GM12878 (cell line): ENCODE measurements at regions of chr9 and their contacts with region 1.

Region 1: GRCh38 chr9:112793213-112793810 is 42.8 kb downstream of the SNX30 start:
- DNase-seq: peak; percentile 34
- ATAC-seq: peak; percentile 99
- H3K4me3 ChIP-seq: no peak overlapping the region
- H3K27ac ChIP-seq: no peak overlapping the region
- H3K4me1 ChIP-seq: peaks cover 11% of the 10 kb centered on the region
- H3K27me3 ChIP-seq: peaks cover 0 to 1% of the 10 kb centered on the region in 2 experiments; a peak in 1 of 4 replicates
- CTCF ChIP-seq: peak; percentile 89 to 94 (median 91)
- EP300 ChIP-seq: no peak
- POLR2A ChIP-seq: no peak
- RAD21 ChIP-seq: peak; percentile 95

Region 2: DNA sequence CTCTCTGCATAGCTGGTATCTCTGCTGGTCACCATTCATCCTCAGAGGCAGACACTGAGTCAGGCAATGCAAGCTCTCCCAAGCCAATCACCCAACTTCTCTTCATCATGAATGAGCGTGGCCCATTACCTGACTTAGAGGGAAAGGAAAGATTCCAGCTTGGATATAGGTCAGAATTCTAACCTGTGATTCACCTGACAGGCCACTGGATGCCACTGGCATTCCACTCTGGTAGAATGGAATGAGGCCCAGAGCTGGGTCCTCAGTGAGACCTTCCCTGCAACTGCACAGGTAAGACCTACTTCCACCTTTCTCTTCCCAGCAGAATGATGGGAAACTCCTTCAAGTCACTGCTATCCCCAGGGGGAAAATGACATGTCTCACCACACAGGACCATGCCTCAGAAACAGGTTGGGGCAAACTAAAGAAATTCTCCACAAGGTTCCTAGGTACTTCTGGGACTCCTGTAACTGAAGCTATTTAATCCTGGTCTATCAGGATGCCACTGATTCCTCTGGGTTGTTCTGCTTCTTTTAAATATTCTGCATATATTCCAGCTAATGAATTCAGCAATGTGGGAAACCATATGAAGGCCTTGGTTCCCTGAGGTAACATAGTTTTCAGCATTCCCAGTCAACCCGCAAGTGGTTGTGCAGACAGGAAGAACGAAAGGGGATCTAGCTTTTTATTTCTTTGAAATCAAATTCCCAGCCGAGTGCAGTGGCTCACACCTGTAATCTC is 680.2 kb before region 1 on chr9:
- CTCF ChIA-PET with region 1: interaction called, 10 read pairs
- POLR2A ChIA-PET with region 1: no interaction called
- RAD21 ChIA-PET with region 1: interaction called, 6 read pairs
- SMC1A ChIA-PET with region 1: interaction called, 4 read pairs
- in situ Hi-C with region 1: no loop called
- intact Hi-C with region 1: no loop called
- DNase-seq: no peak
- ATAC-seq: peak; percentile 75
- H3K4me3 ChIP-seq: no peak overlapping the region
- H3K27ac ChIP-seq: no peak overlapping the region
- H3K4me1 ChIP-seq: no peaks in the 10 kb centered on the region
- H3K27me3 ChIP-seq: no peaks in the 10 kb centered on the region
- CTCF ChIP-seq: peak; percentile 56 to 74 (median 57); a peak in 5 of 6 replicates
- EP300 ChIP-seq: no peak
- POLR2A ChIP-seq: no peak
- RAD21 ChIP-seq: peak; percentile 88

Region 3: DNA sequence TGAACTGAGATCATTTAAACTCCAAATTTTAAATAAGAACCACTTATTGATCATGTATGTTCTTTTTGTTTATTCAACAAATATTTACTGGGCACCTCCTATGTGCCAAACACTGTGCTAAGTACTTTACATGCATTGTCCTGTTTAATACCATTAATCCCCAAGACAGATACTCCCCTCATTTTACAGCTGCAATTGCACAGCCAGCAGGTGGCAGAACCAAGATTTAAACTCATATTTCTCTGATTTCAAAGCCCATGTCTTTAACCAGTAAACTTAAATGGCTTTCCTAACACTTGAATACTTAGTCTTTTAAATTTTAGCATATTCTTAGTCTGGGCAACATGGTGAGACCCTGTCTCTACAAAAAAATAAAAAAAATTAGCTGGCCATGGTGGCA is 350.1 kb before region 1 on chr9:
- CTCF ChIA-PET with region 1: interaction called, 30 read pairs
- POLR2A ChIA-PET with region 1: no interaction called
- RAD21 ChIA-PET with region 1: interaction called, 6 read pairs
- SMC1A ChIA-PET with region 1: interaction called, 14 read pairs
- in situ Hi-C with region 1: loop called (anchors 5 kb)
- intact Hi-C with region 1: loop called (anchors 1 kb)
- DNase-seq: no peak
- ATAC-seq: peak; percentile 61
- H3K4me3 ChIP-seq: no peak overlapping the region
- H3K27ac ChIP-seq: no peak overlapping the region
- H3K4me1 ChIP-seq: peaks cover 4% of the 10 kb centered on the region; the same call in 1 of the 2 replicates
- H3K27me3 ChIP-seq: no peaks in the 10 kb centered on the region
- CTCF ChIP-seq: peak; percentile 57 to 58 (median 58)
- EP300 ChIP-seq: no peak
- POLR2A ChIP-seq: no peak
- RAD21 ChIP-seq: peak; percentile 55

Region 4: GRCh38 chr9:112809351-112809848 is 16.1 kb after region 1 on chr9:
- CTCF ChIA-PET with region 1: interaction called, 12 read pairs
- POLR2A ChIA-PET with region 1: no interaction called
- RAD21 ChIA-PET with region 1: no interaction called
- SMC1A ChIA-PET with region 1: interaction called, 4 read pairs
- in situ Hi-C with region 1: no loop called
- intact Hi-C with region 1: no loop called
- DNase-seq: peak; percentile 98
- ATAC-seq: peak; percentile 99
- H3K4me3 ChIP-seq: no peak overlapping the region
- H3K27ac ChIP-seq: no peak overlapping the region
- H3K4me1 ChIP-seq: peaks cover 28% of the 10 kb centered on the region
- H3K27me3 ChIP-seq: peaks cover 0 to 3% of the 10 kb centered on the region in 2 experiments; a peak in 2 of 4 replicates
- CTCF ChIP-seq: no peak
- EP300 ChIP-seq: peak; percentile 91 to 99
- POLR2A ChIP-seq: no peak
- RAD21 ChIP-seq: 0 out of 2 replicates have a peak, but pooled peaks have one; percentile 5